ENCODE measurements at regions of chr4 and their contacts with region 1.

Region 1: DNA sequence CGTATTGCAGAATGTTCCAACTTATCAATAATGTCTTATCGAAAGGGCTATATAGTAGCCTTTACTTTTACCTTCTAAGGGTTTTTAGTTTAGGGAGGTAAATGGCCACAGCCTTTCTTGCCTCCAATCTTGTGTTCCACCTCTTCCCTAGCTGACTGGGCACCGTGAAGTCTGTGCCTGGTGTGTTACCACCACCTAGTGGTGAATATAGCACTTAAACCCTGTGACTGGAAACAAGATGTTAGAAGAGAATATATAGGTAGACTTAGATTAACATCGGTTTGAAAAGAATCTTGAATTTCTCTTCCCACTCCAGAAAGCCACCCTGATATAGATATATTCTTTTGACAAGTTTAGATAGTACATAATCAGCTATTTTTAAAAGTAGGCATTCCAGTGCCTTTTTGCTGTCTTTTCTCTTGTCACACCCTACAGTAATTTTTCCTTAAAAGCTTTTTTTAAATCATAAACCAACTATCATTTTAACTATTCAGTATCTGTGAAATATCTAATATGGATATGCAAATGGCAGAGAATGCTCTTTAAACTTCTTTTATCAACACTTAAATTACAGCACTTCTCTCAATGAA is 27.8 kb upstream of the ADH7 start:
- DNase-seq: peak; percentile 49 to 77
- H3K4me3 ChIP-seq: no peak overlapping the region
- H3K27ac ChIP-seq: no peak overlapping the region
- H3K4me1 ChIP-seq: no peaks in the 10 kb centered on the region
- H3K27me3 ChIP-seq: no peaks in the 10 kb centered on the region
- CTCF ChIP-seq: peak; percentile 80 to 82

Region 2: DNA sequence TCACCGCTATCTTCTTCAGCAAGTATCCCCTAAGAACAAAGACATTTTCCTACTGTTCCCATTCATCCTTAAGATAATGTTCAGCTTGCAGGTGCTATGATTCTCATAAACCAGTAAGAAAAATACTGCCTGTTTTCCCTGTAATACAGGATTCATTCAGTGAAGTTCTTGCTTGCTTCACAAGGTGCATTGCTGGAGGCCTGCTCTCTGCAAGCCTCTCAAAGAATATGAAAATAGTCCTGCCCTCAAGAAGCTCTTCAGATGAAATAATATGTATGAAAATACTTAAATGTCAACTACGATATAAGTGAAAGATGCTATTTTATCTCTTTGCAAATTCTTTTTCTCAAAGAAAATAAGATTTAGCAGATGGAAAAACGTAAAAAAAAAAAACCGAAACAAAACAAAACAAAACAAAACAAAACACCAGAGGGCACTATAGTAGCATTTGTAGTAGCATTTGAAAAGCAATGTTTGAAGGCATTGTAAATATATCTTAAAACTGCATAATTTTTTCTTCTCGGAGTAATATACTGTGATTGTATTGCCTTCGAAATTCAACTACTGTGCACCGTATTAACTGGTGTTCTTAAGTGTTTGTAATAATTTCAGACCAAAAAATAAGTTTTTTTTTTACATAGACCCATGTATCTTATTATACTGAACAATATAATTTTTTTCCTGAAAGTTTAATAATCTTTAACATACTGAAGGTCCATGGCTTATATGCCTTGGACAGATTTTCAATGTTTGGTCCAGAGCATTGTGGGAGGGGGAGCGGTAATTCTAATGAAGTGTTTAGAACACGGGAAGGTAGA is 344.9 kb before region 1 on chr4:
- intact Hi-C with region 1: loop called (anchors 5 kb)
- DNase-seq: no peak
- H3K4me3 ChIP-seq: no peak overlapping the region
- H3K27ac ChIP-seq: peak overlapping the region in 1 of 2 donors; percentile 12
- H3K4me1 ChIP-seq: peaks cover 0 to 19% (median 0%) of the 10 kb centered on the region in 4 donors
- H3K27me3 ChIP-seq: no peaks in the 10 kb centered on the region
- CTCF ChIP-seq: peak; percentile 16 to 35

Region 3: DNA sequence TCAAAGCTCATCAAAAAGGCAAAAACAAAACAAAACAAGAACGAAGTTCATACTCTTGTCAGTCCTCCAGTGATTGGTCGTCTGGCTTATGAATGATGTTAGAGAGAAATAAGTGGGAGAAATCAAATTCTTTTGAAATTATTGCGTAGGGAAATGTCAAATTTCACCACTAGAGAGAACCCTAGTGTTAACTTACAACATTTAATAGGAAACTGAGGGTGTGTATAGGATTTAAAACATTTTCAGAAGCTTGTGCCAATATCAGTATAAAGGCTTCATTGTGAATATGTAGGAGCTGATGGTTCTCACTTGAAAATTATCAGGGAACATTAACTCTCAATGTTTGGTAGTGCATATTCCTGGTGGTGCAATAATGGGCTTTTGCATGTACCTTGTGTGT is 261.3 kb before region 1 on chr4:
- intact Hi-C with region 1: loop called (anchors 5 kb)
- DNase-seq: no peak
- H3K4me3 ChIP-seq: no peak overlapping the region
- H3K27ac ChIP-seq: peak overlapping the region; percentile 71 to 74
- H3K4me1 ChIP-seq: peaks cover 0 to 45% (median 22%) of the 10 kb centered on the region in 4 donors
- H3K27me3 ChIP-seq: no peaks in the 10 kb centered on the region
- CTCF ChIP-seq: peak; percentile 32 to 40

Measured in tibial artery (tissue), 4 donors.